ENCODE measurements at regions of chr17 and their contacts with region 1.

Region 1: GRCh38 chr17:50845240-50846147 is 10.1 kb downstream of the WFIKKN2 start:
- DNase-seq: peak in 1 of 2 donors; percentile 82
- H3K4me3 ChIP-seq: no peak overlapping the region
- CTCF ChIP-seq: no peak
- POLR2A ChIP-seq: no peak

Region 2: DNA sequence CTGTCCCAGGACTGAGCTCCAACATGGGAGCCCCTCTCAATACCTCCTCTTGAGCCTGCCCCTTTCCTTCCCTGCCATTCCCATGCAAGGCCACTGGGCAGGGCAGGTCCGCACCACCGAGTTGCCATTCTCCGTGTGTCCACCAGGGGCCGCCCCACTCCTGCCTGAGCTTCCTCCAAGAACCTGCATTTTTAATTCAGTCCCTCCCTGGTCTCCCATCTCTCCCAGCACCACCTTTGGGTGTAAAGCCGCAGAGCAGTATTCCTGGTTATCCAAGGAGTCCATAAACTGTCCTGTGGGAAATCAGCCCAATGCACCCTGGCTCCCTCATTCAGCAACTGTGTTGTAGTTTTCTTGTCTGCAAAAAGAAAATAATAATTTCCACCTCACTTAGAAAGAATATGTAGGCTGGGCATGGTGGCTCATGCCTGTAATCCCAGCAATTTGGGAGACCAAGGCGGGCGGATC is 62.3 kb before region 1 on chr17:
- intact Hi-C with region 1: loop called (anchors 2 kb)
- DNase-seq: peak; percentile 80 to 98
- H3K4me3 ChIP-seq: no peak overlapping the region
- CTCF ChIP-seq: peak in 1 of 3 donors; percentile 95
- POLR2A ChIP-seq: no peak

Measured in lower leg skin (tissue), 4 donors.